ENCODE measurements at regions of chr14 and their contacts with region 1.

Region 1: GRCh38 chr14:69580009-69580577 is 5.4 kb upstream of the CCDC177 start:
- DNase-seq: peak; percentile 96
- H3K4me3 ChIP-seq: no peak overlapping the region
- H3K27ac ChIP-seq: peak overlapping the region; percentile 39; the same call in 1 of the 2 replicates
- H3K4me1 ChIP-seq: peaks cover 15% of the 10 kb centered on the region; the same call in 1 of the 2 replicates
- H3K27me3 ChIP-seq: peaks cover 22% of the 10 kb centered on the region; the same call in 1 of the 2 replicates

Region 2: DNA sequence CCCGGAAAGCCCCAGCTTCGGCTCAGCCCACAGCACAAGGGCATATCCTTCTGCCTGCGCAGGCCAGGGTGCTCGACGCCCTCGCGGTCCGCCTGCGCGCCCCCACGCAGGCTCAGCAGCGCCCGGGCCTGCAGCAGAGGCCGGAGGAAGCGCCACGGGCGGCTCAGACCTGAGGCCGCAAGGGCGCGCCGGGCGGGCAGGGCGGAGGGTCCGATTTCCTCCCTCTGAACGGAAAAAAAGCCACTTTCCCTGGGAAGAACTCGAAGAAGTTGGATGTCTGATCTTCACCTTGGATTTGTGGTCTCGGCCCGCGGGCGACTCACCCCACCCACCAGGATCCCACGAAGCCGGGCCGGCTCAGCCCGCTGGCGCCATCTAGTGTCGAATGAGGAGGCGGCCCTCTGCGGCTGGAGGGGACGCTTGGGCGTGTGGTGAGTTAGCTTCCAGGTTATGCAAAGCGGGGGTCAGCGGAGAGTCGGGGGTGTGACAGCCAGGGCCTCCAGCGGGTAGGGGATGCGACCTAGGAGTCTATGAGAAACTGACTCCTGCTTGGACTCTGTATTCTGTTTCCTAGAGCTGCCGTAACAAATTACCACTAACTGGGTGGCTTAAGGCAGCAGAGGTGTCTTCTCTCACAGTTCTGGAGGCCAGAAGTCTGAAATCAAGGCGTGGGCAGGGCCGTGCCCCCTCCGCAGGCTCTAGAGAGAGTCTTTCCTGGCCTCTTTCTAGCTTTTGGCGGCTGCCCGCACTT is 146.8 kb after region 1 on chr14:
- in situ Hi-C with region 1: loop called (anchors 10 kb)
- DNase-seq: peak; percentile 84
- H3K4me3 ChIP-seq: peak overlapping the region; percentile 63
- H3K27ac ChIP-seq: no peak overlapping the region
- H3K4me1 ChIP-seq: no peaks in the 10 kb centered on the region
- H3K27me3 ChIP-seq: no peaks in the 10 kb centered on the region

Region 3: GRCh38 chr14:70027785-70028428 is 447.8 kb after region 1 on chr14:
- in situ Hi-C with region 1: loop called (anchors 25 kb)
- DNase-seq: peak; percentile 57
- H3K4me3 ChIP-seq: no peak overlapping the region
- H3K27ac ChIP-seq: no peak overlapping the region
- H3K4me1 ChIP-seq: no peaks in the 10 kb centered on the region
- H3K27me3 ChIP-seq: no peaks in the 10 kb centered on the region